ENCODE measurements at regions of chr11 and their contacts with region 1.

Region 1: GRCh38 chr11:62665075-62665598 is at the starts of genes C11orf98 and CSKMT:
- DNase-seq: peak; percentile 88
- H3K4me3 ChIP-seq: peak within 1 kb of the TSS; percentile 96
- H3K27ac ChIP-seq: peak within 1 kb of the TSS; percentile 90
- H3K27me3 ChIP-seq: no peaks in the 10 kb centered on the region
- CTCF ChIP-seq: no peak
- polyA plus RNA-seq, gene C11orf98: 38.8 and 43.6 TPM in 2 replicates
- polyA plus RNA-seq, gene CSKMT: 4.6 and 4.7 TPM in 2 replicates

Region 2: DNA sequence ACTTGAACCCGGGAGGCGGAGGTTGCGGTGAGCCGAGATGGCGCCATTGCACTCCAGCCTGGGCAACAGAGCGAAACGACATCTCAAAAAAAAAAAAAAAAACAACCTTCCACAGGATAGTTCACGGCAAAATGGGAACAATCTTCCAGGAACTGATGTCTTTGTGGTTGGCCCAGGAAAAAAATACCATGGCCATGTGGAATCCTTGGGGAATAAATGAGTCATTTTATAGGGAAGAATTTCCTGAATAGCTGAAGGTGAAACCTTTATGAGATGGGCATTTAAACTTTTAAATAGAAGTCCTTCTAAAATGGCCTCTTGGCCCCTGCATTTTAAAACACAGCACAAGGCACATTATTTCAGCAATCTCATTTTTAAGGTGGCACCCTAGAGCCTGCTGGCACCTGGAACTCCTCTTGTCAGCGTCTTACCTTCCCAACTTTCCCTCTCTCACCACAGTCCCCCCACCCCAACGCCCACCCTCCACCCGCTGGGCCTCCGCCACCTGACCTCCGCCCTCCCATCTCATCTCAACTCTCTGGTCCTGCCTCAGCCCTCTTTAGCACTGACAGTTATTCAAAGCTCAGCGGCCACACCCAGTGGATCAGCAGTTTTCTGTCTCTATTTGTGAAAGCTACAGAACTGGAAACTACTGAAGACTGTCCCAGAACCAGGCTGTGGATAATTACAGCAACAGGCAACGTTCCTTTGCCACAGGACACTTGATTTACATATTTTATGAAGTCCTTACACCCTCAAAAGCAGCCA is 203.2 kb before region 1 on chr11:
- CTCF ChIA-PET with region 1: no interaction called
- POLR2A ChIA-PET with region 1: no interaction called
- DNase-seq: no peak
- H3K4me3 ChIP-seq: no peak overlapping the region
- H3K27ac ChIP-seq: no peak overlapping the region
- H3K27me3 ChIP-seq: no peaks in the 10 kb centered on the region
- CTCF ChIP-seq: no peak

Region 3: DNA sequence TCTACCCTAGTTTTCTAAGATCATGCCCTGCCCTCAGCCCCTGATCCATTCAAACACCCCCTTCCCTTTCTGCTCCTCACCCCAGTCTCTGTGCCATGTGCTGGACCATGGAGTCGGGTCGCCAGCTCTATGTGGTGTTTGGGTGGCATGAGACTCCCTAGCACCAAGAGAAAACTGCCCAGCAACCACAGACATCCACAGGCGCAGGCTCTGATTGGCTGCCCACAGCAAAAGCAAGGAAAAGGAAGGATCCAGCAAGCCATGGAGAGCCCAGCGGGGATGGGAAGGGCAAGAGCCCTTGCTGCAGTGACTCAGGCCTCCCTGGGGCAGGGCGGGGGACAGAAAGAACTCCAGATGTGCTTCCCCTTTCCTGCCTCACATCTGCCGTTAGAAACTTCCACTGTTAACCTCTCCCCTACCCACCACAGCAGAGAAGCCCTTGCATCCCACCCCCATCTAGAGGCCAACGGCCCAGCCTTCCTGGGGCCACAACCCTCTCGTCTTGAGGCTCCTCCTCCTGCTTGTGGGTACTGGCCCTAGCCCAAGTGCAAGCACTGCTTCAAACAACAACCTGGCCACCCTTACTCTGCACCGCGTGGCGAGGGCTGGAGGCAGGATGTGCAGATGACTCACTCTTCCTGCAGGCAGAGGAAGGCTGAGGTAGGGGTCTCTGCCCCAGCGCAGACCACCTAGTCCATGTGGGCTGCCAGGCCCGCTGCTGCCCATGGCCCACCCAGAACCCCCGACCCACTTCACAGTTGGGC is 108.8 kb before region 1 on chr11:
- CTCF ChIA-PET with region 1: no interaction called
- POLR2A ChIA-PET with region 1: interaction called, 10 read pairs
- DNase-seq: peak; percentile 86
- H3K4me3 ChIP-seq: peak overlapping the region; percentile 27
- H3K27ac ChIP-seq: peak overlapping the region; percentile 87
- H3K27me3 ChIP-seq: no peaks in the 10 kb centered on the region
- CTCF ChIP-seq: no peak

Region 4: GRCh38 chr11:62601394-62602140 is 63.6 kb before region 1 on chr11 and contains the start of gene MTA2:
- CTCF ChIA-PET with region 1: no interaction called
- POLR2A ChIA-PET with region 1: interaction called, 23 read pairs
- DNase-seq: peak; percentile 96
- H3K4me3 ChIP-seq: peak within 1 kb of the TSS; percentile 80
- H3K27ac ChIP-seq: peak within 1 kb of the TSS; percentile 78
- H3K27me3 ChIP-seq: no peaks in the 10 kb centered on the region
- CTCF ChIP-seq: no peak
- polyA plus RNA-seq, gene MTA2: 22.9 and 36.7 TPM in 2 replicates

Region 5: DNA sequence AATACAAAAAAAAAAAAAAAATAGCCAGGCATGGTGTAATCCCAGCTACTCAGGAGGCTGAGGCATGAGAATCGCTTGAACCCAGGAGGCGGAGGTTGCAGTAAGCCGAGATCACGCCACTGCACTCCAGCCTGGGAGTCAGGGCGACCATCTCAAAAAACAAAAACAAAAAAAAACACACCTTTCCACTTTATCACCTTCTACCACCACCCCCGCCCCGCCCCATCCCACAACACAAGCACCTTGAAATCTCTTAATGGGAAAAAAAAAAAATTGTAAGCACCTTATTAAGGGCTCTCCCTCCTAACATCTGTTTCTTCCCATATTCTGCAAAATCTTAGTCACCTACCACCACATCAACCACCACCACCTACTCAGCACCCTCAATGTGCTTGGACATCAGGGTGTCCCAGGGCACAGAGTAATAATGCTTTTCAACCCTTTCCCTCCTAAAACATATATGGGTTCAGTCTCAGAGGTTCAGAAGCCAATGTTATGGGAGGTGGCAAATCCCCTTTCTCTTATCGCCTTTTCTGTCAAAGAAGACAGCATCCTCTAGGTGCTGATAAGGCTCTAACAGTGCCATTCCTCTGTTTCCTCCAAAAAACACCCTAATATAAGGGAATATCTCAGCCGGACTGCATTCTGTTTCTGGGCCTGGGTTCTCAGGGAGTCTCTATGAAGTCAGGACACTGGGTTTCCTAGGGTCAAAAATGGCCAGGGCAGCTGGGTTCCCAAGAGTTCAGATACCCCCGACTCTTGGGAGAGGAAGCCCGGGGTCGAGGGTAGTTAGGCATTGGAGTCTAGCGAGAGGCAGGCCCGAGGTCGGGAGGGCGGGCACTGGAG is 12.8 kb before region 1 on chr11:
- CTCF ChIA-PET with region 1: interaction called, 3 read pairs
- POLR2A ChIA-PET with region 1: interaction called, 150 read pairs
- DNase-seq: no peak
- H3K4me3 ChIP-seq: peak overlapping the region; percentile 82
- H3K27ac ChIP-seq: peak overlapping the region; percentile 40
- H3K27me3 ChIP-seq: no peaks in the 10 kb centered on the region
- CTCF ChIP-seq: no peak

Region 6: DNA sequence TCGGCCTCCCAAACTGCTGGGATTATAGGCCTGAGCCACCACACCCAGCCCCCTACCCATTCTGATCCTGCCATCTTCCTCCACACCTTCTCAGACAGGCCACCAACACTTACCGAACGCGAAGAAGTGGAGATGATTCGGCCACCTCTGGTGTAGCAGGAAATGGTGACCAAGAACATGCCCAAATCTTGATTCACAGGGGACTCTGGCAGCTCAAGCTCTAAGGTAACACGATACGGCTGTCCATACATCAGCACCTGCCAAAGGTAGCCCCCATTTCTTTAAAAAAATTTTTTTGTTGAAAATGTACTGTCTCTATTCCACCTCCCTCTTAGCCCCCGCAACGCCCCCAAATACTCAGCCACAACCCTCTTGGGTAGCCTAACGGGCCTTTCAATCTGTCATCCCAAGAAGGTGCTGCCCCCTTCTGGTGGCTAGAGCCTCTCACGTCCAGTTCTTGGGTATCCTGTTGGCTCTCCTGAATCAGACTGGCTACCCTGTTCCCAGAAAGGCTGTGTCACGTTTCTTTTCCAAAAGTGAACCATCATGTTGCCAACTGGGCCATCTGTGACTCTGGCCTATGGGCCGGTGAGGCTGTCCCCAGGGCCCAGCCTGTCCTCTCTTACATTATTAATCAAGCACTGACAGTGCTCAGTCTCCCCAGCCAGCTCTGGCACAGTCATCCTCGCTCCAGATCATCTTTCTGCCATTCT is 29.5 kb after region 1 on chr11:
- CTCF ChIA-PET with region 1: interaction called, 5 read pairs
- POLR2A ChIA-PET with region 1: interaction called, 35 read pairs
- DNase-seq: peak; percentile 55
- H3K4me3 ChIP-seq: no peak overlapping the region
- H3K27ac ChIP-seq: no peak overlapping the region
- H3K27me3 ChIP-seq: no peaks in the 10 kb centered on the region
- CTCF ChIP-seq: peak; percentile 90

Region 7: DNA sequence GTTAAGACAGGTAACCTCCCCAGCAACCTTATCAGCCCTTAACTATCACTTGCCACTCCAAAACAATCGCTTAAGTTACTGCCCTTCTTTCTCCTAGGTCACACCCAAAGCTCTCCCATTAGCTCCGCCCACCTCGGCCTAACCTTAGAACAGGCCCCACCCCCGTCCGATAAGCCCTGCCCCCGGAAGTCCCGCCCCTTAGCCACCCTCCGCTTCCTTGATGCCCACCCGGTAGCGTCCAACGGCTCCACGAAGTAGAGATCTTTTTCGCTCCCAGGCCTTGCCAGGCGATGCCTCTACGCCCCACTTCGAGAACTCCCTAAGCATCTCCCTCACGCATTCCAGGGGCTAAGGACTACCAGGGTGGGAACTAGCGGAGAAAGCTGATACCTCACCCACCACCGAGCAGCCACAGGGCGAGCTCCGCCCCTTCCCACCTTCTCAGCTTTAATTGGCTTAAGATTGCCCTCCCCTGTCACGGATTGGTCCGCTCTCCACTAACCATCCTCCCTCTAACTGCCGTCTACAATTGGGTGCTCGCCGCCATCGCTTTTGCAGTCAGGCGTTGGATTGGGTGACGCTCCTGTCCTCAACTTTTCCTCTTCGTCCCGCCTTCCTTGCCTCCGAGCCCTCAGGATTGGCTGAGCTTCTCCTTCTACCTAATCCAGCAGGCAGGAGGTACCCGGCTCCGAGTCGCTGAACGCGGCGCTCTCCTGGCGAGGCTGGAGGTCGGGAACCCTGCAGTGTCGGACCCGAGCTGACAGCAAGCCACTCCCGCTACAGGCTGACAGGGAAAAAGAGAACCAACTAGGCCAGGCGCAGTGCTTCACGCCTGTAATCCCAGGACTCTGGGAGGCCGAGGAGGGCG is 88.8 kb after region 1 on chr11 and contains the start of gene ZBTB3:
- CTCF ChIA-PET with region 1: no interaction called
- POLR2A ChIA-PET with region 1: interaction called, 13 read pairs
- DNase-seq: peak; percentile 97
- H3K4me3 ChIP-seq: peak within 1 kb of the TSS; percentile 94
- H3K27ac ChIP-seq: peak within 1 kb of the TSS; percentile 80
- H3K27me3 ChIP-seq: no peaks in the 10 kb centered on the region
- CTCF ChIP-seq: no peak
- polyA plus RNA-seq, gene ZBTB3: 3.2 and 3.7 TPM in 2 replicates

Measured in AG04450 (cell line).